RWPE1 (cell line): ENCODE measurements at regions of chr6 and their contacts with region 1.

Region 1: DNA sequence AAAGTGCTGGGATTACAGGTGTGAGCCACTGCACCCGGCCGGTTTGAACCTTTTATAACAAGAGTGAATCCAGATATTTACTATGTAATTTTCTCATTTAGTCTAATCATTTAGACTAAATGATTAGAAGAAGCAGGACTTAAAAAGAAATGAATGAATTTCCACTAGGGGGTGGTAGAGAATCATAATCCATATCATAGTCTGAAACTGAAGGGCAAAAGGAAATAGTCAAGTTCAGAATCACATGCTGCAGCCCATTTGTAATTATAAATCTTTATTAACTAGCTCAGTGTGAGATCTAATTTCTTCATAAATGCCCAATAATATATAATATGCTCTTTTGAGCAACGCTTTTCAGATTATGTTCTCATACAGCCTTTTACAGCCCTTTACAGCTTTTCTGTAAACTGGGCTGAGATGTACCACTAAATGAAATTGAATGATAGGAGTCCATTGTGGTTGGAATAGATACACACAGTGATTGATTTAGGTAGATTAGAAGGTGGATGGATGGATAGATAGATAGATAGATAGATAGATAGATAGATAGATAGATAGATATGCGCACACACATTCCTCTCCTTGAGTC is 31.8 kb downstream of the PSMB9 start:
- DNase-seq: peak; percentile 57
- H3K27ac ChIP-seq: no peak overlapping the region
- CTCF ChIP-seq: peak; percentile 63

Region 2: DNA sequence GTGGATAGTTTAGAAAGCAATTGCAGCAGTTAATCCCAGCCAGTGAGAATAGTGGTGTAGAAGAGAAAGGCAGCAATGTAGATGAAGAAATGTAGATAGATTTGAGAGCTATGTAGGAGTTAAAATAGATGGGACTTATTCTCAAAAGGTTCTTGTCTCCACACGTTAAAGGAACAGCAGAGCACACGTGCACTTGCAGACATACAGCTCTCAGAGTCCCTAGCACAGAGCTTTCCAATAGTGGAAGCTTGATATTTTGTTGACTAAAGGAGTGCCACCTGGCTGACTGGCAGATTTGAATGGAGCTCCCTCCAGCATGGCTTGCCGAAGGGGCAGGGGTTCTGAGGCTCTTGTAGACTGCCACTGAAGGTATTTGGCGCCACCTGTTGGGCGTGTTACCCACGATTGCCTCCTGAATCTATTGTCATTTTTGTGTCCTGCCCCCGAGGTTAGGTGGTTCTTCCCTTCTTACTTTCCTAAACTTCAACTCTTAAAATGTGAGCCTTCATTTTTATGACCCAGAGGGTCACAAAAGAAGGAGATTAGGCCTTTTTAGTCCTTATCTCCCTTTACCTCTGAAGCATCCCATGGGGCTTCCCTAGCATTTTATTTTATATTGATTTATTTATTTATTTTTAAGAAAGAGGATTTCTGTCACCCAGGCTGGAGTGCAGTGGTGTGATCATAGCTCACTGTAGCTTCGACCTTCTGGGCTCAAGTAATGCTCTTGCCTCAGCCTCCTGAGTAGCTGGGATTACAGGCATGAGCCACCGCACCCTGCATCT is 99.0 kb after region 1 on chr6:
- CTCF ChIA-PET with region 1: interaction called, 14 read pairs
- POLR2A ChIA-PET with region 1: no interaction called
- DNase-seq: peak; percentile 71
- H3K27ac ChIP-seq: no peak overlapping the region
- CTCF ChIP-seq: peak; percentile 87

Region 3: DNA sequence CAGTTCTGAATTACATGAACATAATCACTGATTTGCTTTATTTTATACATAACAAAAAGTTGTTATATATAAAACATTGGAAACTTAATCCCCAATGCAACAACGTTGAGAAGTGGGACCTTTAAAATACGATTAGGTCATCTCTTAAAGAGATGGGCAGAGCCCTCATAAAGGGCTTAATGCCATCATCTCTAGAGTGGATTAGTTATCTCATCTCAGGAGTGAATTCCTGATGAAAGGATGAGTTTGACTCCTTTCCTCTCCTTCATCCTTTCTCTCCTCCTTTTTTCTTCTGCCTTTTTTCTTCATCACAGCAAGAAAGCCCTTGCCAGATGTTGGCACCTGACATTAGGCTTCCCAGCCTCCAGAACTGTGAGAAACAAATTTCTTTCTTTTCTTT is 109.7 kb after region 1 on chr6:
- CTCF ChIA-PET with region 1: no interaction called
- POLR2A ChIA-PET with region 1: no interaction called
- DNase-seq: no peak
- H3K27ac ChIP-seq: no peak overlapping the region
- CTCF ChIP-seq: no peak